Caco-2 (cell line): ENCODE measurements at regions of chr11 and their contacts with region 1.

Region 1: GRCh38 chr11:129315781-129316481 is 59.7 kb upstream of the BARX2 start:
- DNase-seq: peak; percentile 99 to 100
- H3K4me3 ChIP-seq: no peak overlapping the region
- H3K4me3 Mint-ChIP-seq: peak overlapping the region; percentile 66
- H3K27ac Mint-ChIP-seq: peak overlapping the region; percentile 94
- H3K4me1 ChIP-seq: peaks cover 69% of the 10 kb centered on the region
- H3K4me1 Mint-ChIP-seq: peaks cover 80% of the 10 kb centered on the region
- H3K27me3 ChIP-seq: no peaks in the 10 kb centered on the region
- H3K27me3 Mint-ChIP-seq: no peaks in the 10 kb centered on the region
- CTCF ChIP-seq: peak in 1 of 2 experiments; percentile 83

Region 2: DNA sequence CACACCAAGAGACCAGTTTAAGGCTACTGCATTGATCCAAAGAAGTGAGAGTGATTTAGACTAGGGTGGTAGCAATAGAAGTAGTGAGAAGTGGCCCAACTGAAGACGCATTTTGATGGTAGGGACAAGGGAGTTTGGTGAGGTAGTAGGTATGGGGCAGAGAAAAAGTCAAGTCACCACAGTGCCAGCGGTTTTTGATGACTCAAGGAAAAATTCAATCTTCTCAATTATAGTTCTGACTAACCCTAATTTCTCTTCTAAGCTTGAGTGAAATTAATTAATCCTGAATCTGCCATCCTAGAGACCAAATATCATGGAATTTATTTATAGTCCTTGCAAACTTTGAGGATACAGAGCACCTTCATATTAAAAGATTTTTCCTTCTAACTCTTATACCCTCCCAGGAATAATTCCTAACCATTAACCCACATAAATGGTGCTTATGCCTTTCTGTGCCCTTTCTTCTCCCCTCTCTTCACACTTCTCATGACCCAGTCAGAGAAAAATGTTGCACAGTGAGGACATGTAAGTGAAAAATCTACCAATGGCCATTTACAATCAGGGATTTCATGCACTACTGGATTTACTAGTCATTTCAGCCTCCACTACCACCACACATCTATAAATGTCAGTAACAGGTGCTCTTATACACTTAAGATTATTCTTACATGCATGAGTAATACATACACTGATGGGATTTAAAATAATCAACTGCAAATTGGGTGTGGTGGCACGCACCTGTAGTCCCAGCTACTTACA is 77.9 kb before region 1 on chr11:
- CTCF ChIA-PET with region 1: interaction called, 5 read pairs
- POLR2A ChIA-PET with region 1: no interaction called
- intact Hi-C with region 1: loop called (anchors 5 kb)
- DNase-seq: no peak
- H3K4me3 ChIP-seq: no peak overlapping the region
- H3K4me3 Mint-ChIP-seq: no peak overlapping the region
- H3K27ac Mint-ChIP-seq: peak overlapping the region; percentile 4
- H3K4me1 ChIP-seq: peaks cover 17% of the 10 kb centered on the region
- H3K4me1 Mint-ChIP-seq: peaks cover 27% of the 10 kb centered on the region
- H3K27me3 ChIP-seq: no peaks in the 10 kb centered on the region
- H3K27me3 Mint-ChIP-seq: no peaks in the 10 kb centered on the region
- CTCF ChIP-seq: no peak

Region 3: GRCh38 chr11:129259931-129260348 is 56.0 kb before region 1 on chr11:
- CTCF ChIA-PET with region 1: interaction called, 6 read pairs
- POLR2A ChIA-PET with region 1: no interaction called
- intact Hi-C with region 1: loop called (anchors 1 kb)
- DNase-seq: peak; percentile 53 to 58
- H3K4me3 ChIP-seq: no peak overlapping the region
- H3K4me3 Mint-ChIP-seq: peak overlapping the region; percentile 54
- H3K27ac Mint-ChIP-seq: peak overlapping the region; percentile 61
- H3K4me1 ChIP-seq: peaks cover 36% of the 10 kb centered on the region
- H3K4me1 Mint-ChIP-seq: peaks cover 60% of the 10 kb centered on the region
- H3K27me3 ChIP-seq: no peaks in the 10 kb centered on the region
- H3K27me3 Mint-ChIP-seq: no peaks in the 10 kb centered on the region
- CTCF ChIP-seq: no peak

Region 4: GRCh38 chr11:129279326-129280026 is 36.5 kb before region 1 on chr11:
- CTCF ChIA-PET with region 1: interaction called, 5 read pairs
- POLR2A ChIA-PET with region 1: interaction called, 4 read pairs
- intact Hi-C with region 1: loop called (anchors 1 kb)
- DNase-seq: peak; percentile 94 to 98
- H3K4me3 ChIP-seq: peak overlapping the region; percentile 84
- H3K4me3 Mint-ChIP-seq: peak overlapping the region; percentile 90
- H3K27ac Mint-ChIP-seq: peak overlapping the region; percentile 84
- H3K4me1 ChIP-seq: peaks cover 79% of the 10 kb centered on the region
- H3K4me1 Mint-ChIP-seq: peaks cover 60% of the 10 kb centered on the region
- H3K27me3 ChIP-seq: no peaks in the 10 kb centered on the region
- H3K27me3 Mint-ChIP-seq: no peaks in the 10 kb centered on the region
- CTCF ChIP-seq: peak in 1 of 2 experiments; percentile 38

Region 5: DNA sequence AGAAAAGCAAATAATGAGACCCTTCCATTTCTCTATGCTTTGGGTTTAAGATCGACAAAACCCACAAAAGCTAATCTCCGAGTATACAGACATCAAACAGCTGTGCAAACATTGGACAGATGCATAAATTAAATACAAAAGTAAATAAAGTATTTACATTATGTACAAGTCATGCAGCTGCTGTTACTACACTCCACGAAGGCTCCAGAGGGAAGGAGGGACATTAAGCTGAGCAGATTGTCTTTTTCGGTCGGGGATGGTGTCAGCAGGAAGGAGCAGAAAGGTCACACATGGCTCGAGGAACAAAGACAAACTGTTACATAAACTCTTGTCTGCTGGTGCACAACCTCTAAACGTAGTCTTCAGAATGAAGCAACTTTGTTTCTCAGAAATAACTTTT is 29.1 kb before region 1 on chr11:
- CTCF ChIA-PET with region 1: interaction called, 8 read pairs
- POLR2A ChIA-PET with region 1: interaction called, 3 read pairs
- intact Hi-C with region 1: loop called (anchors 1 kb)
- DNase-seq: peak; percentile 51 to 66
- H3K4me3 ChIP-seq: no peak overlapping the region
- H3K4me3 Mint-ChIP-seq: peak overlapping the region; percentile 59
- H3K27ac Mint-ChIP-seq: peak overlapping the region; percentile 88
- H3K4me1 ChIP-seq: peaks cover 90% of the 10 kb centered on the region
- H3K4me1 Mint-ChIP-seq: peaks cover 82% of the 10 kb centered on the region
- H3K27me3 ChIP-seq: no peaks in the 10 kb centered on the region
- H3K27me3 Mint-ChIP-seq: no peaks in the 10 kb centered on the region
- CTCF ChIP-seq: no peak

Region 6: DNA sequence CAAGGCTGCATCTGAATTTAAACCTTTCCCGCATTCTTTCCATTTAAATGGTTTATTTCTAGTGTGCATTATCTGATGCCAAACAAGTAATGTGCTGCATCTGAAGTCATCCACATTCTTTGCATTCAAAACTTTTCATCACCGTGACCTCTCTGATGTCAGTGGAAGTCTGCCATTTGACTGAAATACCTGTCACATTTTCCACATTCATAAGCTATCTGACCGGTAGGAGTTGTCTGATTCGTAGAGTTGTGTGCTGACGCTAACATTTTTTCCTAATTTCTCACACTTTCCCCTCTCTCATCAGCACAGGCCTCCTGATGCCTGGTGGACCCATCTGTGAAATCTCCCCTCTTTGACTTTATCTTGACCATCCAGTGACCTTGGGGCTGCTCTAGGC is 20.2 kb before region 1 on chr11:
- CTCF ChIA-PET with region 1: interaction called, 9 read pairs
- POLR2A ChIA-PET with region 1: interaction called, 6 read pairs
- intact Hi-C with region 1: loop called (anchors 1 kb)
- DNase-seq: peak; percentile 65
- H3K4me3 ChIP-seq: no peak overlapping the region
- H3K4me3 Mint-ChIP-seq: peak overlapping the region; percentile 7
- H3K27ac Mint-ChIP-seq: peak overlapping the region; percentile 69
- H3K4me1 ChIP-seq: peaks cover 43% of the 10 kb centered on the region
- H3K4me1 Mint-ChIP-seq: peaks cover 29% of the 10 kb centered on the region
- H3K27me3 ChIP-seq: no peaks in the 10 kb centered on the region
- H3K27me3 Mint-ChIP-seq: no peaks in the 10 kb centered on the region
- CTCF ChIP-seq: no peak